ENCODE measurements at regions of chr17 and their contacts with region 1.

Region 1: GRCh38 chr17:5281814-5282653 is at the start of gene RABEP1:
- DNase-seq: peak; percentile 68 to 93 (median 85)
- H3K4me3 ChIP-seq: peak within 1 kb of the TSS; percentile 53 to 94 (median 76)
- H3K27ac ChIP-seq: peak within 1 kb of the TSS in 55 of 59 donors; percentile 31 to 97 (median 87)
- H3K27me3 ChIP-seq: no peaks in the 10 kb centered on the region
- CTCF ChIP-seq: peak in 38 of 56 donors; percentile 8 to 51 (median 32)
- total RNA-seq, gene RABEP1: 78.7 to 125 (median 97.7) TPM

Region 2: DNA sequence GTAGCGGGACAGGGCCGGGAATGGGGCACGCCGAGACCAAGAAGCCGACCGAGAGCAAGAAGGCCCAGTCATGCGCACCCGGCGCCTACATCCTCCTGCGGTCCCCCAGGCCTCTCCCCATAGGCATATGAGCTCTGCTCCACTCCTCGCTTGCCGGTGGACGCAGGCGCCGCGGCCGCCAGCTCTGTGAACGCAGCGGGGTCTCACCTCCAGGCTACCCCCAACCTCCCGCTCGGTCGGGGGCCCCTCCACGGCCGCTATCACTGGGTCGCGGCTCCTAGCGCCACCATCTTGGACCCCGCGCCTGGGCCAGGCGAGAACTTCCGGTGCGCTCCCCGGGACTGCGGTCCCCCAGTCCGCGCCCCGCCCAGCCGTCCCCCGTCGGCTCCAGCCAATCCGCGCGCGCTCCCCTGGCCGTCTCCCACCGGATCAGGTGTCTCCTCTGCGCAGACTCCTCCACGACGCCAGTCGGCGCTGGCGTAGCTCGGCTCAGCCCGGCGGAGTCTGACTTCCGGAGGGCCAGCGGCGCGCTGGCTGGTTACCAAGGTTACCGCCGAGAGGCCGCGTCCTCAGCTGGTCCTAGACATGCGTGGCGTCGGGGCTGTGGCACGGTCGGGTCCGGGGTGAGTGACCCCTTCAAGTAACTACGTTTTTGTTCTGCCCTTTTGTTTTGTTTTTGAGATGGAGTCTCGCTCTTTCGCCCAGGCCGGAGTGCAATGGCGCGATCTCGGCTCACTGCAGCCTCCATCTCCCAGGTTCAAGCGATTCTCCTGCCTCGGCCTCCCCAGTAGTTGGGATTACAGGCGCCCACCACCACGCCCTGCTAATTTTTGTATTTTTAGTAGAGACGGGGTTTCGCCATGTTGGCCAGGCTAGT is 90.3 kb before region 1 on chr17 and contains the start of gene ZNF594:
- intact Hi-C with region 1: loop called in 1 of 2 experiments (anchors 10 kb)
- DNase-seq: peak; percentile 88 to 97 (median 96)
- H3K4me3 ChIP-seq: peak within 1 kb of the TSS; percentile 62 to 99 (median 91)
- H3K27ac ChIP-seq: peak within 1 kb of the TSS; percentile 14 to 95 (median 87)
- H3K27me3 ChIP-seq: no peaks in the 10 kb centered on the region
- CTCF ChIP-seq: peak; percentile 41 to 92 (median 76)
- total RNA-seq, gene ZNF594: 14.7 to 32.7 (median 20.5) TPM

Region 3: GRCh38 chr17:5249615-5250014 is 32.4 kb before region 1 on chr17:
- intact Hi-C with region 1: loop called in 1 of 2 experiments (anchors 2 kb)
- DNase-seq: peak in 6 of 10 donors; percentile 43 to 77 (median 50)
- H3K4me3 ChIP-seq: no peak overlapping the region
- H3K27ac ChIP-seq: peak overlapping the region in 2 of 59 donors; percentile 29 to 61
- H3K27me3 ChIP-seq: no peaks in the 10 kb centered on the region
- CTCF ChIP-seq: peak; percentile 38 to 79 (median 66)

Region 4: DNA sequence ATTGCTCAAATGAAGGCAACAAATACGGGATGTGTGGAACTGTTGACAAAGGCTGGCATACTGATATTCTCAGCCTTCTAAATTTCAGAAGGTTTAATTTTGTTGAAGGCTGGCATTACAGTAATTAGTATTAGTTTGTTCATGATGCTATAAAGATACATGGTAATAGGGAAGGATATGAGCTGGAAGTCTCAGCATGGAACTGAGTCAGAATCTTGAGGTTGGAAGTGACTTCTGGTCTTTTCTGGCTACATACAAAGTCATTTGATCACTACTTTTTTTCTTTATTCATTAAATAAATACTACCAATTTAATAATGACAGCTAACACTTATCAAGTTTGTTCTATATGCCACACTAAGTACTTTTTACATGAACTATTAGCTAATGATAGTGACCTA is 22.6 kb after region 1 on chr17:
- intact Hi-C with region 1: loop called in 1 of 2 experiments (anchors 2 kb)
- DNase-seq: no peak
- H3K4me3 ChIP-seq: no peak overlapping the region
- H3K27ac ChIP-seq: peak overlapping the region in 6 of 59 donors; percentile 27 to 73 (median 46)
- H3K27me3 ChIP-seq: no peaks in the 10 kb centered on the region
- CTCF ChIP-seq: no peak

Region 5: DNA sequence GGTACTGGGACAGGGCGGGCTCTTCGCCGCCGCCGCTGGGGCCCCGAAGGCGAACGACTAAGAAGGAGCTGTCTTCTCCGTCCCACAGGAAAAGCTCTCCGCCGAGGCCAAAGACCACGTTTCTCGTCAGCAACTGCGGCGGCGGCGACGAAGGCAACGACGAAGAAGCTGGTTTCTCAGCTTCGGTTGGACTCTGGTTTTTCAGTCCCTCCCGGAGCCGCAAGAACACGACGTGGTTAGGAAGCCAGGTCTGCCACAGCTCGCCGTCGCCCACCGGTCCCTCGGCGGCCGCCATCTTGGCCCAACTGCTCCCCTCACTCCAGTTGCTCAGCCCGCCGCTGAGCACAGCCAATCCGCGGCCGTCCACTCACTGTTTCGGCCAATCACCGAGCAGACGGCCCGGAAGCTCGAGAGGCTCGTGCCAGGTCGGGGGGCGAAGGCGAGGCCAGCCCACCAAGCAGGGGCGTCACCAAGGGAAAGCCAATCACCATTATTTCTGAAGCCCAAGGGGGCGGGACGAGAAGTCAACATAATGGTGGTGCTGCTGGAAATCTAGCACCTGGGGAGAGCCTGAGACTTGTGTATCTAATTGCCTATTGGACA is 137.4 kb after region 1 on chr17 and contains the start of gene NUP88:
- intact Hi-C with region 1: loop called in 1 of 2 experiments (anchors 10 kb)
- DNase-seq: peak; percentile 94 to 98 (median 98)
- H3K4me3 ChIP-seq: peak within 1 kb of the TSS; percentile 59 to 99 (median 91)
- H3K27ac ChIP-seq: peak within 1 kb of the TSS; percentile 44 to 94 (median 86)
- H3K27me3 ChIP-seq: no peaks in the 10 kb centered on the region
- CTCF ChIP-seq: peak in 16 of 56 donors; percentile 4 to 62 (median 23)
- total RNA-seq, gene NUP88: 34.5 to 69.6 (median 50.1) TPM